HCT116 (cell line): ENCODE measurements at regions of chr3 and their contacts with region 1.

Region 1: DNA sequence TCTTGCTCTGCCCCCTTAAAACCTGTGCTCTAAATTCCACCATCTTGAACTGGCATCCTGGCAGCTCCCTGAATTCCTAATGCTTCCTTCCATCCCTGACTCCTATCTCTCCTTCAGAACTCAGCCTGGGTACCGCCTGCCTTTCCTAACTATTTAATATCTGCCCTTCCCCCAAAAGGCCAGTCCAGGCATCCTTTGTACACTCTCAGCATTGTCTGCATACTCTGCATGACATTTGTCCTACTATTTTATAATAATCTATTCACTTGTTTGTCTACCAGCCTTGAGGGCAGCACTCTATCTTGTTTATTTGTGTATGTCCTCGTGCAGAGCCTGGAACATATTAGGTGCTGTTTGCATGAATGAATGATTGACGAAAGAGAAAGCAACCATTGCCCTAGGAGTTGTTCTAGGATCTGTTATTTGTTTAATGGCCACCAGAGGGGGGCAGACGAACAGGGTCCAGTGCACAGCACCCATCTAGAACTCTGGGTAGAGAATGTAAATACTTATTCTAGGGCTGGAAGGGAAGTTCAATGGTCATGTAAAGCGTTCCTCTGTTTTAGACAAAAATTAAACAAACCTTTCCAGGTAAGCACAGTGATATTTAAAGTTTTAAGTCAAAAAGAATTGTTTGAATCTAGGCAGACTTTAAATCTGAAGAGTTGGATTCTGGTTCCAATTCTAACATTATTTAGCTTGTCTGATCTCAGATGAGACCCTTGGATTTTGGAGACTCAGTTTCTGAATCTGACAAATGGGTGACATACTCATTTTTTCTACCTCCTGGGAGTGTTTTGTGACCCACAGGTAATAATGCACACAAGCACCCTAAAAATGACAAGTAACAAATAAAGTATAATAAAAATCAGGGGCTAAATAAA is 125.8 kb upstream of the GALNT15 start:
- DNase-seq: peak; percentile 61
- ATAC-seq: peak; percentile 99
- H3K4me3 ChIP-seq: no peak overlapping the region
- H3K27ac ChIP-seq: no peak overlapping the region
- H3K4me1 ChIP-seq: 0 out of 4 replicates have a peak, but pooled peaks cover 0 to 3% of the 10 kb centered on the region in 2 experiments
- H3K27me3 ChIP-seq: no peaks in the 10 kb centered on the region
- CTCF ChIP-seq: peak; percentile 70 to 97 (median 84)
- POLR2A ChIP-seq: no peak
- RAD21 ChIP-seq: peak; percentile 99

Region 2: DNA sequence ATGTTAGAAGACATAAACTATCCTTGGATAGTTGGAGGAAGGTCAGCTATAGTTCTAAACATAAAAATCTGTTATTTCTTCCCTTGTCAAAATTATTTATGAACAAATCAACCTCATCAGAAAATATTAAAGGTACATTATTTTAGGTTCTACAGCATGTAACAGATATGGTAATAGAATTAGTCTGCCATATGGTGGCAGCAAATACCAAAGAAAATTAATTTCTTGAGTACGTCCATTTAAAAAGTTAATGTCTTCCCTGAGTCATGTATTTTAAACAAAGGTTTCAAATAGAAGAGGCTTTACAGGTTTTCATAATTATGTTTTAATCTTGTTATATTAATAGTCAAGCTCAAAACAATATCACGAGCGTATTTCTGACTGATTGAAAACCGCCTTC is 233.0 kb before region 1 on chr3:
- CTCF ChIA-PET with region 1: interaction called, 3 read pairs
- POLR2A ChIA-PET with region 1: no interaction called
- RAD21 ChIA-PET with region 1: no interaction called
- intact Hi-C with region 1: loop called (anchors 2 kb)
- DNase-seq: peak; percentile 49
- ATAC-seq: peak; percentile 67; the same call in 1 of the 2 replicates
- H3K4me3 ChIP-seq: no peak overlapping the region
- H3K27ac ChIP-seq: no peak overlapping the region
- H3K4me1 ChIP-seq: peaks cover 2 to 3% of the 10 kb centered on the region in 2 experiments; a peak in 1 of 4 replicates
- H3K27me3 ChIP-seq: no peaks in the 10 kb centered on the region
- CTCF ChIP-seq: peak in 2 of 3 experiments; percentile 49 to 50; a peak in 2 of 6 replicates
- POLR2A ChIP-seq: no peak
- RAD21 ChIP-seq: peak; percentile 71

Region 3: DNA sequence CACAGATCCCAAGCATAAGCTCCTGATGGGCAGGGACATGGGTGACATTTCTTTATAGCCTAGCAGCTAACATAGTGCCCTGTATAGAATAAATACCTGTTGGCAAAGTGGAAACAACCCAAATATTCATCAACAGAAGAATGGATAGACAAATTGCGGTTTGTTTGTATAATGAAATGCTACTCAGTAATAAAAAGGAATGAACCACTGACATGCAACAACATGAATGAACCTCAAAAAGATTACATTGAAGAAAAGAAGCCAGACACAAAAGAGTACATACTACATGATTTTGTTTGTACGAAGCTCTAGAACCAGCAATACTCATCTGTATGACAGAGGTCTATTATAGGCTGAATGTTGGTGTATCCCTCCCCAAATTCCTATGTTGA is 92.2 kb after region 1 on chr3:
- CTCF ChIA-PET with region 1: interaction called, 14 read pairs
- POLR2A ChIA-PET with region 1: no interaction called
- RAD21 ChIA-PET with region 1: interaction called in 1 of 2 experiments, 7 read pairs
- intact Hi-C with region 1: loop called (anchors 1 kb)
- DNase-seq: no peak
- ATAC-seq: no peak
- H3K4me3 ChIP-seq: no peak overlapping the region
- H3K27ac ChIP-seq: no peak overlapping the region
- H3K4me1 ChIP-seq: no peaks in the 10 kb centered on the region
- H3K27me3 ChIP-seq: no peaks in the 10 kb centered on the region
- CTCF ChIP-seq: no peak
- POLR2A ChIP-seq: no peak
- RAD21 ChIP-seq: no peak

Region 4: GRCh38 chr3:16247276-16248061 is 198.8 kb after region 1 on chr3:
- CTCF ChIA-PET with region 1: interaction called, 3 read pairs
- POLR2A ChIA-PET with region 1: no interaction called
- RAD21 ChIA-PET with region 1: no interaction called
- intact Hi-C with region 1: loop called (anchors 1 kb)
- DNase-seq: peak; percentile 66
- ATAC-seq: peak; percentile 88
- H3K4me3 ChIP-seq: no peak overlapping the region
- H3K27ac ChIP-seq: no peak overlapping the region
- H3K4me1 ChIP-seq: peaks cover 0 to 15% of the 10 kb centered on the region in 2 experiments; a peak in 1 of 4 replicates
- H3K27me3 ChIP-seq: no peaks in the 10 kb centered on the region
- CTCF ChIP-seq: peak; percentile 82 to 97 (median 93)
- POLR2A ChIP-seq: no peak
- RAD21 ChIP-seq: peak; percentile 97